GM12878 (cell line): ENCODE measurements at regions of chr14 and their contacts with region 1.

Region 1: GRCh38 chr14:65287264-65288131 is 125.0 kb upstream of the FUT8 start:
- DNase-seq: no peak
- ATAC-seq: peak; percentile 77
- H3K4me3 ChIP-seq: peak overlapping the region; percentile 53
- H3K27ac ChIP-seq: peak overlapping the region; percentile 98
- H3K4me1 ChIP-seq: peaks cover 77% of the 10 kb centered on the region
- H3K27me3 ChIP-seq: no peaks in the 10 kb centered on the region
- CTCF ChIP-seq: peak in 2 of 3 experiments; percentile 2 to 6; a peak in 1 of 6 replicates
- EP300 ChIP-seq: peak; percentile 51 to 55; a peak in 2 of 4 replicates
- POLR2A ChIP-seq: peak; percentile 75
- RAD21 ChIP-seq: no peak; the same call in 1 of the 2 replicates

Region 2: DNA sequence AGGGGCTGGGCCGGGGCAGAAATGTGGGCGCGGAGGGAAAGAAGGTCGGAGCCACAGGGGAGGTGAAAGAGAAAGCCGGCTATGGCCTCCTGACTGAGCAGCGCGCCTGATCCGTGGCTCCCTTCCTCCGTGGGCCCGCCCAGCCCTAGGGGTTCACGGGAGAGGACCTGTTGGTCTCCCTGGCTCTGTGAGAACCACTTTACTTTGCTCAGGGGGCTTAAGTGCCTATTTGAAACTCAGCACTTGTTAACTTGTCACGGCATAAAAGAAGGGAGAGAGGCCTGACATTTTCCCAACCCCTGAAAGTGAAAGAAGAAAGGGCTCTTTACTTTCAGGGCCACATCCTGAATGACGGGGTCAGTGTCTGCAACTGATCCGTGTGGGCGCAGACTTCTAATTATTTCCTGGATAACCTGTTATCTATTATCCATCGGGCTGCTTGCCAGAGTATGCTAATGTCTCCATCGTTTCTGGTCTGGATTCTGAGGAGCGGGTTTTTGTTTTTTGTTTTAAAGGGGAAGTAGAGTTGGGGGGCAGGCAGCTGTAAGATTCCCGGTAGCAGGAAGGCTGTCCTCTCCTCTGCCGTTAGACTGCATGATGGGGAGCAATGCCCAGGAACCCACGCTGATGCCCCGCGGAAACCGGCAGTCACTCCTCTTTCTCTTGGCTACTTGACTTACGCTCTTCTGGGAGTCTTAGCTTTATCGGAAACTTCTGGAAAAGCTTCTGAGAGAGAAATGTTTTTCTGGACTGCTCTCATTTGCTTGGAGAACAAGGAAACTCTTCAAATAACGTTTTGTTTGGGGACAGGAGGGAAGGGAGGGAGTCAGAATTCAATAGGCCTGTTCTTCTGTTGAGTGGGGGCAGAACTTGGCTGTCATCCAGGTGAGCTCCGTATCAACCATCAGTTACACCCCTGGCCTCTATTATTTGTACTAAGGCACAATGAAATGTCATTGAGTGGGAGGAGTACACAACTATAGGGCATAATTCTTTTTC is 57.4 kb before region 1 on chr14:
- CTCF ChIA-PET with region 1: interaction called, 4 read pairs
- POLR2A ChIA-PET with region 1: interaction called, 3 read pairs
- RAD21 ChIA-PET with region 1: interaction called, 9 read pairs
- SMC1A ChIA-PET with region 1: interaction called, 31 read pairs
- in situ Hi-C with region 1: no loop called
- intact Hi-C with region 1: loop called (anchors 2 kb)
- DNase-seq: no peak
- ATAC-seq: peak; percentile 60
- H3K4me3 ChIP-seq: 0 out of 2 replicates have a peak overlapping the region, but pooled peaks have one; percentile 26
- H3K27ac ChIP-seq: peak overlapping the region; percentile 64
- H3K4me1 ChIP-seq: peaks cover 41% of the 10 kb centered on the region
- H3K27me3 ChIP-seq: no peaks in the 10 kb centered on the region
- CTCF ChIP-seq: no peak
- EP300 ChIP-seq: no peak
- POLR2A ChIP-seq: no peak
- RAD21 ChIP-seq: no peak

Region 3: DNA sequence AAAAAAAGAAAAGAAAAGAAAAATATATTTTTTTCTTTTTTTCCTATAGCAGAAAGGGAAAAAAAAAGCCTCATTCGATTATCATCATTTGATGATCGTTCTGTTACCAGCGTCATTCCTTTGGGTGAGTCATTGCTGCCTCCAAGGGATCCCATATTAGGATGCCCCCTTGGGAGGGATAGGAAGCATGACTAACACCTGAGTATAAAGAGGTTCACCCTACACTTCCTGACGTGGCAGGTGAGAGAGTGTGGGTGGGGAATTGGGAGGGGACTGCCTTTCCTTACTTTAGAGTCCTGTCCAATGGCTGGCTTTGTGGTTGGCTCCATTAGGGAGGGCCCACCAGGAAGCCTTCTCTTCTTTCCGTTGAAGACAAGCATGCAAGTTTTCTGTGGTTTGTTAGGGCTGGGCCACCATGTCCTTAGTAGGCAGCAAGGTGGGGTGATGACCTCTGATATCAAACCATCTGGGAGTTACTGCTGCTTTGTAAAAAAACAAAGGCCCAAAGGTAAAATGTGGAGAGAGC is 68.9 kb after region 1 on chr14:
- CTCF ChIA-PET with region 1: interaction called, 12 read pairs
- POLR2A ChIA-PET with region 1: interaction called, 3 read pairs
- RAD21 ChIA-PET with region 1: interaction called, 9 read pairs
- SMC1A ChIA-PET with region 1: interaction called, 19 read pairs
- in situ Hi-C with region 1: no loop called
- intact Hi-C with region 1: loop called (anchors 1 kb)
- DNase-seq: no peak
- ATAC-seq: no peak
- H3K4me3 ChIP-seq: no peak overlapping the region
- H3K27ac ChIP-seq: peak overlapping the region; percentile 72
- H3K4me1 ChIP-seq: peaks cover 64% of the 10 kb centered on the region
- H3K27me3 ChIP-seq: no peaks in the 10 kb centered on the region
- CTCF ChIP-seq: no peak
- EP300 ChIP-seq: no peak
- POLR2A ChIP-seq: no peak
- RAD21 ChIP-seq: no peak

Region 4: DNA sequence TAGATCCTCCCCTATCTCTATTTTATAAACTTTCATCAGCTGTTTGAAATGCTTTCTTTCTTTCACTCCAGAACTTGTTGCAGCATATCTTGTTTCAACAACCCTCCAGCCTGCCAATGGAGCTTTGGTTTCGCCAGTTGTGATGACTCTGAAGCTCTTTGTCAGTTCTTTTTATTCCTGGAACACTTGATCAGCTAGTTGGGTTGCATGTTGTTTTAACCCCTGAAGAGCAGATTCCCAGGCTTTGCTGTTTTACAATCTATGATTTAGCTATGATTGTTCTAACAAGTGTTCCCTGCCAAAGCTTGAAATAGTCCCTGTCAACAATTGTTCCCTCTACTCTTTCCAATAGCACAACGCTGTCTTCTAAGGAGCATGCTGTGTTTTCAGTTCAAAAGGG is 74.4 kb after region 1 on chr14:
- CTCF ChIA-PET with region 1: interaction called, 12 read pairs
- POLR2A ChIA-PET with region 1: no interaction called
- RAD21 ChIA-PET with region 1: interaction called, 5 read pairs
- SMC1A ChIA-PET with region 1: interaction called, 19 read pairs
- in situ Hi-C with region 1: no loop called
- intact Hi-C with region 1: no loop called
- DNase-seq: no peak
- ATAC-seq: no peak
- H3K4me3 ChIP-seq: no peak overlapping the region
- H3K27ac ChIP-seq: no peak overlapping the region
- H3K4me1 ChIP-seq: peaks cover 24% of the 10 kb centered on the region
- H3K27me3 ChIP-seq: no peaks in the 10 kb centered on the region
- CTCF ChIP-seq: no peak
- EP300 ChIP-seq: no peak
- POLR2A ChIP-seq: no peak
- RAD21 ChIP-seq: no peak

Region 5: DNA sequence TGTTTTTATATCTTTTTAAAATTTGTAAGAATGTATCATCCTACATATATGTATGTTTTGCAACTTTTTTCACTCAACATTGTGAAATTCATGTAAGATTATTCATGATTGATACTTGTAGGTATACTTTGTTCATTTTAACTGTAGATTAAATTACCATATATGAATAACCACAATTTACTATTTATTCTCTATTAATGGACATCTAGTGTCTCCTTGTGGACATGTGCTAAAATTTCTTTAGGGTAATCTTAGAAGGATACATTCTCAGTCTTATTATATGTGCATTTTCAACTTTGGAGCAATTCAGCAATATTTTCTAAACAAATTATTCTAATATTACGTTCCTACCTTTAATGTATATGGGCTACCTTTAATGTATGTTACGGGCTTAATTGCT is 317.4 kb after region 1 on chr14:
- CTCF ChIA-PET with region 1: no interaction called
- POLR2A ChIA-PET with region 1: no interaction called
- RAD21 ChIA-PET with region 1: interaction called, 4 read pairs
- SMC1A ChIA-PET with region 1: no interaction called
- in situ Hi-C with region 1: no loop called
- intact Hi-C with region 1: loop called (anchors 5 kb)
- DNase-seq: no peak
- ATAC-seq: no peak
- H3K4me3 ChIP-seq: no peak overlapping the region
- H3K27ac ChIP-seq: no peak overlapping the region
- H3K4me1 ChIP-seq: no peaks in the 10 kb centered on the region
- H3K27me3 ChIP-seq: no peaks in the 10 kb centered on the region
- CTCF ChIP-seq: peak in 2 of 3 experiments; percentile 21 to 56; a peak in 2 of 6 replicates
- EP300 ChIP-seq: no peak
- POLR2A ChIP-seq: no peak
- RAD21 ChIP-seq: no peak